Common myeloid progenitor, CD34-positive (primary cell): ENCODE measurements at regions of chr19 and their contacts with region 1.

Region 1: DNA sequence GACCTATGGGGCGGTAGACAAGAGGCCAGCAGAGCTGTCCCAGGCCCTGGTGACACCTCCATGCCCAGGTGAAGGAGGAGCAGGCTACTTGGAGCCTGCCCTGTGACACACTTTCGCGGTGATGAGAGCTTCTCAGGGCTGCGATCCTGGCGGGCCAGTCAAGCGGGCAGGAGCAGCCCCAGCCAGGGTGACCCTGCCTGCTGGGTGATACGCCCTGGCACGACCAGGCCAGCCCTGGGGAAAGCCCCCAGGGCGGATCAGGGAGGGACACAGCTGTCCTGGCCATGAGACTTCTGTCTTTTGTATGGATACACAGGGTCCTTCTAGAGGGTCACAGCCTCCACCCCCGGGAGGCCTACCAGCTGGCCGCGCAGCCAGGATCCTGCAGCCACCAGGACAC is 13.0 kb downstream of the DNM2 start:
- DNase-seq: peak in 1 of 3 donors; percentile 17
- H3K4me3 ChIP-seq: no peak overlapping the region
- H3K27ac ChIP-seq: peak overlapping the region in 1 of 2 experiments; percentile 34
- H3K4me1 ChIP-seq: peaks cover 0 to 26% (median 19%) of the 10 kb centered on the region in 4 experiments
- H3K27me3 ChIP-seq: no peaks in the 10 kb centered on the region

Region 2: DNA sequence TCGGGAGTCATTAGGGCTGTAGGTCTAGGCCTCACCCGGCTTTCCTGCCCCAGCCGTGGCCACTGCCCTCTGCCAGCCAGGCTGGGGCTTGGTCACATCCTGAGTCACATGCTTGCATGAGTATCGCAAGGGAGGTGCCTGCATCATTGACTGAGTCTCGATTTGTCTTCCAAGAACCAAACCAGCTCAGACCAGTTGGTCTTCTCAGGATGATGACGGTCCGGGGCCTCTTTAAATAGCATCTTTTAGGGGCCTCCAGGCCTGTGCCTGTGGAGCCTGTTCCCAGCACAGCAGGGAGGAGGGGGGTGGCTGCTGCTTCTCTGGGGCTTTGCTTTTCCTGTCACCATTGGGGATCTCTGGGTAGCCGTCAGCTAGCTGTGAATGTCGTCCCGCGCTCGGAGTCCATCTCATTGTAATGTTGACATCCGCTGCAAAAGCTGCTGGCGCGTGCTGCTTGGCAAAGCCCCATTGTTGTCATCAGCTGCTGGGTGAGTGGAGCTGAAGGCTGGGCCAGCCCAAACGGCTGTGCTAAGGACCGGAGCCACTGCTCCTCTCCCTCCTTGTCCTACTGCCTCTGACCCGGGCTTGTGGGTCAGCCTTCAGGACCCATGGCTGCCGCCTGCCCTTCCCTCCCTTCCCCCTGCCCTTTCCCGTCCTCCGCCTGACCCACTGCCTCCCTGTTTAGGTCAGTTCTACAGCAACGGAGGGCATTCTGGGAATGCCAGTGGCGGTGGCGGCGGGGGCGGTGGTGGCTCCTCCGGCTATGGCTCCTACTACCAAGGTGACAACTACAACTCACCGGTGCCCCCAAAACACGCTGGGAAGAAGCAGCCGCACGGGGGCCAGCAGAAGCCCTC is 44.0 kb before region 1 on chr19:
- CTCF ChIA-PET with region 1: no interaction called
- POLR2A ChIA-PET with region 1: no interaction called
- DNase-seq: no peak
- H3K4me3 ChIP-seq: no peak overlapping the region
- H3K27ac ChIP-seq: no peak overlapping the region
- H3K4me1 ChIP-seq: no peaks in the 10 kb centered on the region
- H3K27me3 ChIP-seq: no peaks in the 10 kb centered on the region

Region 3: DNA sequence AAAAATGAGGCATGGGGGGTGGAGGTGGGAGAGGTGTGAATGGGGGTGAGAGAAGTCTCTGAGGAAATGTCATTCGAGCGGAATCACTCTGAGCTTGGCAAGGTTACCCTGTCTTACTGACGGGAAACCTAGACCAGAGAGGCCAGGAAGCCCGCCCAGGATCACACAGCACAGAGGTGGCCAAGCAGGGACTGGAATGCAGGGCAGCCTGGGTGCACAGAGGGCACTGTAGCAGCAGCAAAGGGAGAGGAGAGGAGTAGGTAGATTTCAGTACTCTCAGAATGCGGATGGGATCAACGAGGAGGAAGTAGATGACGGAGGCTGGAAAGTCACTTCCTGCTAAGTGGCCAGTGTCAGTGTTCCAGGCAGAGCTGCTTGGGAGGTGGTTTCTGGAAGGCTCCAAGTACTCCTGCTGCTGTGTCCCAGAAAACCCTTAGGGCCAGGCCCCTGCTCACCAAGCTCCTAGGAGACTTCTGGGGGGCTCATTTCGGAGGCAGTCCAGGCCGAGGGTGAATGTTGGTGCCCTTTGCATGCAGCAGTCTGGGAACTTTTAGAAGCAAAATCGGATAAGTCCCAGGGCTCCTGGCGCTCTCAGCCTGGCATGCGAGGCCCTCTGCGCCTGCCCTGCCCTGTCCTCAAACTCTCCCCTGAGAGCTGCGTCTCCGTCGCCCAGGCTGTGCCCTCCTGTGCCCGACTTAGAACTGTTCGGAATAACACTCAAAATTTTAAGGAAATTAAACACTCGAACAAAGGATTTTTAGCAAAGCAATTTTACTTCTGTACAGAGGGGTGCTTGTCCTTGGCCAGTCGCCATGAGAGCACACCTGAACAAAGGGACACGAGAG is 20.4 kb after region 1 on chr19:
- CTCF ChIA-PET with region 1: interaction called, 13 read pairs
- POLR2A ChIA-PET with region 1: no interaction called
- DNase-seq: peak in 1 of 3 donors; percentile 18
- H3K4me3 ChIP-seq: no peak overlapping the region
- H3K27ac ChIP-seq: peak overlapping the region in 1 of 2 experiments; percentile 17
- H3K4me1 ChIP-seq: peaks cover 0 to 34% (median 27%) of the 10 kb centered on the region in 4 experiments
- H3K27me3 ChIP-seq: no peaks in the 10 kb centered on the region